Esophagus muscularis mucosa (tissue), 4 donors: ENCODE measurements at regions of chr6 and their contacts with region 1.

Region 1: GRCh38 chr6:167826230-167826895 is 348 bp upstream of the AFDN start:
- DNase-seq: no peak
- H3K4me3 ChIP-seq: peak overlapping the region; percentile 66 to 91 (median 73)
- H3K27ac ChIP-seq: peak overlapping the region; percentile 54 to 69 (median 58)
- H3K4me1 ChIP-seq: peaks cover 14 to 39% (median 32%) of the 10 kb centered on the region in 4 donors
- H3K27me3 ChIP-seq: no peaks in the 10 kb centered on the region
- CTCF ChIP-seq: peak; percentile 19 to 47 (median 41)
- EP300 ChIP-seq: no peak
- POLR2A ChIP-seq: no peak

Region 2: DNA sequence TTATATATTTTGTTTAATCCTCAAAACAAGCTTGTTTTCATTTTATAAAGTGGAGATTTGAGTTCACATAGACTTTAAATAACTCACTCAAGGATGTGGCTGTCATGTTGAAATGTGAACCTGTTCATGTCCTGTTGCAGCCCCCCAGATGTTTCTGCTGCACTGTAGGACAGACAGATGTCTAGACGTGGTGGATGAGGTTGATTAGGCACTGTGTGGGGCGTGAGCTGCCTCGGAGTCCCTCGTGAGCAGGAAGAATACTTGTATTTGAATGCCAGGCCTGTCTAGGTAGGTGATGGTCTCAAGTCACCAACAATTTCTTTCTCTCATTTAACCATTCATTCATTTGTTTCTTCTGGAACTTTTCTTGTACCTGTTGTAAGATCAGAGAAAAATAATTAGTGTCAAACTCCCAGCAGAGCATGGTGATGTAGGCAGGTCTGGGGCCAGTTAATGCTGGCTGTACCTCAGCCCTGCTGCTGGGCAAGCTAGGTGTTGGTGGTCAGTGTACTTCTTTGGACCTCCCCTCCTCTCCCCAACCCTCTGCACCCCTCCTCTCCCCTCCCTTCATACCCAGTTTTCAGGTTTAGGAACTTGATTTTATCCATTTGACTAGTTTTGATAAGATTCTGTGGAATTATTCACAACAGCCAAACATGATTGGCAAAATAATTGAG is 34.3 kb after region 1 on chr6:
- intact Hi-C with region 1: loop called (anchors 5 kb)
- DNase-seq: no peak
- H3K4me3 ChIP-seq: no peak overlapping the region
- H3K27ac ChIP-seq: no peak overlapping the region
- H3K4me1 ChIP-seq: peaks cover 39 to 61% (median 52%) of the 10 kb centered on the region in 4 donors
- H3K27me3 ChIP-seq: no peaks in the 10 kb centered on the region
- CTCF ChIP-seq: no peak
- EP300 ChIP-seq: no peak
- POLR2A ChIP-seq: no peak

Region 3: DNA sequence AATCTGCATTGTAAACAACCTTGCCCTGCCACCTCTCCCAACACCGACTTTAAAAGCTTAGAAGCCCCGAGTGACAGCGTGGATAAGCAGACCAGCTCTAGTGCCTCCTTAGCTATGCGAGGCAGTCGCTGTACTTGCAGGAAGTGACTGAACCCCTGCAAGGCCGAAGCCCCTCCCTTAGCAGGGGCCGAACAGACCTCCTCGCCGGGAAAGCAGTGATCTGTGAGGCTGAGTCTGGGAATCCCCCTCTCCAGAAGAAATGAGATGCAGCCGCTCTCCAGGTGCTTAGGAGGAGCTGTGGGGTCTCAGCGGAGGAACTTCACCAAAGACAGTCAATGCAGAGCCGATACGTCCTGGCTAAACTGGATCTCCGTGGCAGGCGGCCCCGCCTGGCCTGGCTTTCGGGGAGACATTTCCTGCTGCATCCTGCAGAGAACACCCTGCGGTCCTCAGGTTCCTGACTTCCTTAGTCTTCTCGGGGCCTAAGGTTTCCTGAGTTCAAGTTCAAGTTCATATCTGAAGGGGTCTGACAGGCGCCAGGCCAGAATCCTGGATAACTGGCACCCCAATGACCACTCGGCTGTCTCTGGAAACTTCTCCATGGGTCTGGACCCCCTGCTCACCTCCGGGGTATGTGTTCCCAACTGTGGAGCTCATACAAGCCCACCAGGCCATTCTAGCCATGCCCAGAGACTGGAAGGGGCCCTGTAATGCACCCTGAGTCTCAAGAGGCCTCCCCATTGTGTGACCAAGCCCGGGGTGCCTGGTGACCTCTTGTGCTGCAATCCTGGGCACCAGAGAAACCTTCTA is 273.0 kb after region 1 on chr6:
- intact Hi-C with region 1: no loop called
- DNase-seq: no peak
- H3K4me3 ChIP-seq: no peak overlapping the region
- H3K27ac ChIP-seq: no peak overlapping the region
- H3K4me1 ChIP-seq: peaks cover 3 to 21% (median 11%) of the 10 kb centered on the region in 4 donors
- H3K27me3 ChIP-seq: peaks cover 0 to 65% (median 21%) of the 10 kb centered on the region in 4 donors
- CTCF ChIP-seq: no peak
- EP300 ChIP-seq: no peak
- POLR2A ChIP-seq: no peak

Region 4: DNA sequence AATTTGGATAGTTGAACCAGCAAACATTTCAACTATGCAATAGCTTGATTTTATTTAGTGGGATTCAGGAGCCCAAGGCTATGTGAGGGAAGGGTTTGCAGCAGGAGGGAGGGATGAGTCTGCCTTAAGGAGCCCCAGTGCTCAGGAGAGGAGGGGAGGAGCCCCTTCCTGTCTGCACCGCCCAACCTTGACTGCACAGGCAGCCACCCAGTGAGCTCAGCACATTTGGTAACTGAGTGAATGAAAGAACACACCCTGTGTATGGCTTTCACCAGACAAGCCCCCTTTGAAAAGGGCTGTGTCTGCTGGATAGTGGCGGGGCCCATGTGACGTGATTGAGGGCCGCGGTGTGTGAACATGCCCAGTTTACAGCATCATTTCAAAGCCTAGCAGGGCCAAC is 476.2 kb after region 1 on chr6:
- intact Hi-C with region 1: no loop called
- DNase-seq: no peak
- H3K4me3 ChIP-seq: no peak overlapping the region
- H3K27ac ChIP-seq: no peak overlapping the region
- H3K4me1 ChIP-seq: no peaks in the 10 kb centered on the region
- H3K27me3 ChIP-seq: peaks cover 0 to 8% (median 0%) of the 10 kb centered on the region in 4 donors
- CTCF ChIP-seq: no peak
- EP300 ChIP-seq: no peak
- POLR2A ChIP-seq: no peak